Transverse colon (tissue), 4 donors: ENCODE measurements at regions of chr21 and their contacts with region 1.

Region 1: DNA sequence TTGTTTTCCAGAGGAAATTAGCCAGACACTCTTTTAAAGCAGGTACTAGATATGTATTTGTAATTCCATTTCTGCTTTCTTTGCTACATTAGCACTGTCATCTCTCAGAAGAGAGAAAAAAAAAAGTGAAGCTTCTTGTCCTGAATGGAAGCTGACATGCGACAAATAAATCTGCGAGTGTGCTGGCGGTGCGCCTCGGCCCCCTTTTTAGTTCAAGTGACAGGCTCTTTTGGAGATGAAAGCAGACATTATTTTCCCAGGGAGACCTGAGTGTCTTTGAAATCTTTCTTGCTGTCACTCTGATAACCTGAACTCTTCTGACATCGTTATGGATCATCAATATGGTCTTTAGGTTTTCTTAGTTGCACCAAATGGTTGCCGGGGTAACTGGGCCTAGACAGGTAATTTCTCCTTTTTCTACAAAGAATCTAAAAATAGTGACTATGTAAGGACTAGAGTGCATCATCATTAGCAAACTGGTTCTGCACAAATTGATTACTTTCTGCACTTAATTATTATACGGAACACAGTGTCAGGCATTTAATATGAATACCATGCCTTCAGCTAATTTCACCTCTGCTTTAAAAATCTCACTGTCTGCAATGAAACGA is 478.6 kb downstream of the PCP4 start:
- DNase-seq: no peak
- H3K4me3 ChIP-seq: no peak overlapping the region
- H3K27ac ChIP-seq: no peak overlapping the region
- H3K4me1 ChIP-seq: no peaks in the 10 kb centered on the region
- H3K27me3 ChIP-seq: peaks cover 3% of the 10 kb centered on the region
- CTCF ChIP-seq: no peak
- EP300 ChIP-seq: no peak
- POLR2A ChIP-seq: no peak

Region 2: GRCh38 chr21:40282912-40283886 is 62.6 kb before region 1 on chr21:
- in situ Hi-C with region 1: no loop called
- intact Hi-C with region 1: no loop called
- DNase-seq: no peak
- H3K4me3 ChIP-seq: no peak overlapping the region
- H3K27ac ChIP-seq: no peak overlapping the region
- H3K4me1 ChIP-seq: no peaks in the 10 kb centered on the region
- H3K27me3 ChIP-seq: no peaks in the 10 kb centered on the region
- CTCF ChIP-seq: no peak
- EP300 ChIP-seq: no peak
- POLR2A ChIP-seq: no peak

Region 3: GRCh38 chr21:40639616-40640194 is 293.9 kb after region 1 on chr21:
- in situ Hi-C with region 1: no loop called
- intact Hi-C with region 1: no loop called
- DNase-seq: no peak
- H3K4me3 ChIP-seq: no peak overlapping the region
- H3K27ac ChIP-seq: no peak overlapping the region
- H3K4me1 ChIP-seq: no peaks in the 10 kb centered on the region
- H3K27me3 ChIP-seq: no peaks in the 10 kb centered on the region
- CTCF ChIP-seq: no peak
- EP300 ChIP-seq: no peak
- POLR2A ChIP-seq: no peak

Region 4: GRCh38 chr21:41641821-41642701 is 1296.2 kb after region 1 on chr21:
- in situ Hi-C with region 1: no loop called
- intact Hi-C with region 1: loop called (anchors 5 kb)
- DNase-seq: no peak
- H3K4me3 ChIP-seq: no peak overlapping the region
- H3K27ac ChIP-seq: peak overlapping the region; percentile 28 to 57 (median 48)
- H3K4me1 ChIP-seq: peaks cover 0 to 7% (median 3%) of the 10 kb centered on the region in 4 donors
- H3K27me3 ChIP-seq: peaks cover 21% of the 10 kb centered on the region
- CTCF ChIP-seq: no peak
- EP300 ChIP-seq: no peak
- POLR2A ChIP-seq: no peak